Mammary epithelial cell (primary cell): ENCODE measurements at regions of chr2 and their contacts with region 1.

Region 1: DNA sequence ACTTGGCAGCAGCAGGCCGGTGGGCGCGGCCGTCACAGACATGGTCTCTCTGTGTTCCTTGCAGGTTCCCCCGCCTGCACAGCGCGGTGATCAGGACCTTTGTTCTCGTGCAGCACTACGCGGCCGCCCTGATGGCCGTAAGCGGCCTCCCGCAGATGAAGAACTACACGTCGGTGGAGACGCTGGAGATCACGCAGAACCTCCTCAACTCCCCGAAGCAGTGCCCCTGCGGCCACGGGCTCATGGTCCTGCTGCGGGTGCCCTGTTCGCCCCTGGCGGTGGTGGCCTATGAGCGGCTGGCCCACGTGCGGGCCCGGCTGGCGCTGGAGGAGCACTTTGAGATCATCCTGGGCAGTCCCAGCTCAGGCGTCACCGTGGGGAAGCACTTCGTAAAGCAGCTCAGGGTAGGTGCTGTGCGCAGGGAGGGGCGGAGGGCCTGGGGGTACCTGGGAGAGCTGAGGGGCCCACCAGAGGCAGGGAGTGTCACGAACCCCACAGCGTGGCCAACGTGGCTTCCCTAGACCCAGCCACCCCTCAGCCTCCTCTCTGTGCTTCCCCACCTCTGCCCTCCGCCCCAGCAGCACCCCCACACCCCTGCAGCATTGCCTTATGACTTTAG is 59.3 kb downstream of the NTSR2 start:
- DNase-seq: no peak
- H3K4me3 ChIP-seq: no peak overlapping the region
- H3K27ac ChIP-seq: no peak overlapping the region
- H3K4me1 ChIP-seq: peaks cover 6% of the 10 kb centered on the region
- H3K27me3 ChIP-seq: peaks cover 2% of the 10 kb centered on the region
- CTCF ChIP-seq: no peak

Region 2: GRCh38 chr2:11527001-11527400 is 83.7 kb before region 1 on chr2:
- CTCF ChIA-PET with region 1: no interaction called
- dilution Hi-C with region 1: loop called (anchors 5 kb)
- in situ Hi-C with region 1: no loop called
- intact Hi-C with region 1: no loop called
- DNase-seq: no peak
- H3K4me3 ChIP-seq: no peak overlapping the region
- H3K27ac ChIP-seq: no peak overlapping the region
- H3K4me1 ChIP-seq: peaks cover under 1% of the 10 kb centered on the region
- H3K27me3 ChIP-seq: no peaks in the 10 kb centered on the region
- CTCF ChIP-seq: no peak